Calu3 (cell line): ENCODE measurements at regions of chr5 and their contacts with region 1.

Region 1: GRCh38 chr5:148383564-148384379 is at the start of gene FBXO38:
- DNase-seq: peak; percentile 96
- H3K4me3 Mint-ChIP-seq: peak within 1 kb of the TSS; percentile 84
- H3K27ac Mint-ChIP-seq: peak within 1 kb of the TSS; percentile 90
- H3K4me1 Mint-ChIP-seq: peaks cover 24% of the 10 kb centered on the region
- H3K27me3 Mint-ChIP-seq: no peaks in the 10 kb centered on the region
- CTCF ChIP-seq: no peak
- total RNA-seq, gene FBXO38: 53.1 and 59.2 TPM in 2 replicates

Region 2: DNA sequence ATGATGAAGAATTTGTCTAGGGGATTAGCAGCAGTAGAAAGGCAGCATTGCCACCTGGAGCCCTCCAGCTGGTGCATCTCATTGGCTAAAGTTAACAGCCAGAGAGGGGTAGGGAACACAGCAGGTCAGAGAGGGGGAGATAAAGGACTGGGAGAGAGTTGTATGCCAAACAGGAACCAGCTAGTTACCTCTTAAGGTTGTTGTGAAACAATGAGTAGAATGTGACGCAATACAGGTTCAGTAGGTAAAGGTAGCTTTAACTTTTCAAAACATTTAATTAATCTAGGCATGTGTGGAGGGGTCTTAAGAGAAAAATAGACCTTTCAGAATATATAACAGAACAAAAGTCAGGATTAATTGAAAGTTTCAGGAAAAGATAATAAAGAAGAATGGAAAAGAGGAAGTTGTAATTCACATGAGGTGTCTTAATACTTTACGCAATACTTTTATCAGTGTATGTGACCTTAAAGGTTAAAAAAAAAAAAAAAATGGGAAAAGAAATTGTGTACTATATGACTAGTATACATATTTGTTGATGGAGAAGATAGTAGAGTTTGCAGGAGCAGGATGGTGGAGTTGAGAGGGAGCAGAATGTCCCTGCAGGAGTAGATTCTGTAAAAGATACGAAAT is 14.3 kb after region 1 on chr5:
- CTCF ChIA-PET with region 1: no interaction called
- intact Hi-C with region 1: loop called (anchors 2 kb)
- DNase-seq: peak; percentile 19
- H3K4me3 Mint-ChIP-seq: peak overlapping the region; percentile 6
- H3K27ac Mint-ChIP-seq: peak overlapping the region; percentile 60
- H3K4me1 Mint-ChIP-seq: peaks cover 55% of the 10 kb centered on the region
- H3K27me3 Mint-ChIP-seq: no peaks in the 10 kb centered on the region
- CTCF ChIP-seq: no peak